Colonic mucosa (tissue), 4 donors: ENCODE measurements at regions of chr13 and their contacts with region 1.

Region 1: DNA sequence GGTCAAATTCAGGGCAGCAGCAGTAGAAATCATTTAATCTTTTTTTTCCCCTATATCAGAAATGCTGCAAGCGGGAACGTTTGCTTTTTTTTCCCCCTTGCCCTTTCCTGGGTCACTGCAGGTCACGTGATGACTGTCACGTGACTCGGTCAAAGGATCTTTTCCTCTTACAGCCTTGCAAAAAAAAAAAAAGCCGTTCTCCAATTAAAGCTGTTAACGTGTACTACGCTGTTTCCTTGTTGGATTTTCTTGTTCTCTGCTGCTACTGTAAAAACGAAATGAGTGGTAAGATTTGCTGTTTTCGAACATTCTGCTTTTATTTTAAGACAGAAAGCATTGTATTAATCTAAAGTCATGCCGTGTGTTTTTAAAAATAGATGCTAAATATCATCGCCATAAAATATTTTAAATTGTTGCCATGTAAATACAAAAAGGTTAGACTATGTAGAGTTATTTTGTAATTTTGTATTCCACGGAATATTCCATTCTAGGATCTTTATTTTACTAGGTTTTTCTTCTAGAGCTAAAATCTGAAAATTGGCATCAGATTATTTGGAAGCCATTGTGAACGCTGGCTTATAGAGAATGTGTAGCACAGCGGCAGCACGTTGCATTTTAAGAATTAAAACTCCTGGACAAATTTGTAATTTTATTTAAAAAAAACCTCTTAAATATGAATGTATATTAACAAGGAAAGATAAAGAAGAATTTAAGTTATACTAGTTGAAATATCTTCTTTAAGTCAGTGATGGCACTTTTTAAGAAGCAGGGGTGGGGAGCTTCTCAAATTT is 109.8 kb upstream of the MLNR start:
- DNase-seq: peak; percentile 88
- H3K4me3 ChIP-seq: peak overlapping the region; percentile 44
- H3K27ac ChIP-seq: peak overlapping the region; percentile 69
- H3K4me1 ChIP-seq: peaks cover 5% of the 10 kb centered on the region
- H3K27me3 ChIP-seq: no peaks in the 10 kb centered on the region
- CTCF ChIP-seq: no peak

Region 2: GRCh38 chr13:48653472-48653939 is 456.8 kb before region 1 on chr13 and contains the start of gene CYSLTR2:
- intact Hi-C with region 1: no loop called
- DNase-seq: no peak
- H3K4me3 ChIP-seq: no peak within 1 kb of the TSS
- H3K27ac ChIP-seq: peak within 1 kb of the TSS; percentile 7
- H3K4me1 ChIP-seq: no peaks in the 10 kb centered on the region
- H3K27me3 ChIP-seq: no peaks in the 10 kb centered on the region
- CTCF ChIP-seq: no peak
- total RNA-seq, gene CYSLTR2: 0.10 to 0.80 TPM

Region 3: DNA sequence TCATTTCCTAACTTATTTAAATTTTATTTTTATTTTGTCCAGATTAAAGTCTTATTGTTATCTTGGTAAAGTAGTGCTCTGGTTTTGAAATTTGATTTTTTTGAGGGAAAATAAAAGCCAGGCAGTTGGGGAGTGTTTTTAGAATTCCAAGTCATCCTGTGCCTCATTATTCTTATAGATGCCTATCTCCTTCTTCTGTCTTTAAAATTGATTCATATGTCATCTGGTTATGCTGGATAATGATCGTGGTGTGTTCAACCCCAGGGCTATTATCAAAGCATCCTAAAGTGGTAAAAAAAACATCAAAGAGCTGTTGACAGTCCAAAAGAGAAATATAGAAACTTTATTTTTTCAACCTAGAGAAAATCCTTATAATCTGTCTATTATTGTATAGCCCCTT is 140.6 kb before region 1 on chr13:
- intact Hi-C with region 1: loop called (anchors 5 kb)
- DNase-seq: no peak
- H3K4me3 ChIP-seq: no peak overlapping the region
- H3K27ac ChIP-seq: no peak overlapping the region
- H3K4me1 ChIP-seq: peaks cover 2% of the 10 kb centered on the region
- H3K27me3 ChIP-seq: no peaks in the 10 kb centered on the region
- CTCF ChIP-seq: no peak

Region 4: GRCh38 chr13:49146950-49147355 is 36.6 kb after region 1 on chr13:
- intact Hi-C with region 1: no loop called
- DNase-seq: no peak
- H3K4me3 ChIP-seq: no peak overlapping the region
- H3K27ac ChIP-seq: peak overlapping the region; percentile 18
- H3K4me1 ChIP-seq: no peaks in the 10 kb centered on the region
- H3K27me3 ChIP-seq: no peaks in the 10 kb centered on the region
- CTCF ChIP-seq: no peak